CD4-positive, alpha-beta T cell (primary cell): ENCODE measurements at regions of chr1 and their contacts with region 1.

Region 1: GRCh38 chr1:174159252-174160108 is at the start of gene RABGAP1L:
- DNase-seq: peak; percentile 88 to 99 (median 94)
- ATAC-seq: peak; percentile 90
- H3K4me3 ChIP-seq: peak within 1 kb of the TSS; percentile 73
- H3K4me3 Mint-ChIP-seq: peak within 1 kb of the TSS; percentile 96
- H3K27ac ChIP-seq: peak within 1 kb of the TSS; percentile 85 to 95
- H3K27ac Mint-ChIP-seq: peak within 1 kb of the TSS; percentile 92
- H3K4me1 ChIP-seq: peaks cover 20% of the 10 kb centered on the region
- H3K4me1 Mint-ChIP-seq: peaks cover 58% of the 10 kb centered on the region
- H3K27me3 ChIP-seq: no peaks in the 10 kb centered on the region
- H3K27me3 Mint-ChIP-seq: no peaks in the 10 kb centered on the region
- CTCF ChIP-seq: no peak
- total RNA-seq, gene RABGAP1L: 59.8 to 67.6 TPM

Region 2: GRCh38 chr1:173714759-173715537 is 444.5 kb before region 1 on chr1 and contains the start of gene KLHL20:
- CTCF ChIA-PET with region 1: no interaction called
- POLR2A ChIA-PET with region 1: interaction called, 4 read pairs
- intact Hi-C with region 1: loop called in 1 of 2 experiments (anchors 5 kb)
- DNase-seq: peak; percentile 70 to 94 (median 81)
- ATAC-seq: peak; percentile 97
- H3K4me3 ChIP-seq: peak within 1 kb of the TSS; percentile 63
- H3K4me3 Mint-ChIP-seq: peak within 1 kb of the TSS; percentile 97
- H3K27ac ChIP-seq: peak within 1 kb of the TSS; percentile 73 to 81
- H3K27ac Mint-ChIP-seq: peak within 1 kb of the TSS; percentile 91
- H3K4me1 ChIP-seq: peaks cover 8% of the 10 kb centered on the region
- H3K4me1 Mint-ChIP-seq: peaks cover 36% of the 10 kb centered on the region
- H3K27me3 ChIP-seq: peaks cover 4 to 19% of the 10 kb centered on the region in 2 experiments
- H3K27me3 Mint-ChIP-seq: peaks cover 18% of the 10 kb centered on the region
- CTCF ChIP-seq: no peak
- total RNA-seq, gene KLHL20: 29.4 to 30.4 TPM

Region 3: GRCh38 chr1:173867753-173868265 is 291.7 kb before region 1 on chr1 and contains the start of gene GAS5:
- CTCF ChIA-PET with region 1: no interaction called
- POLR2A ChIA-PET with region 1: interaction called, 7 read pairs
- intact Hi-C with region 1: loop called (anchors 1 to 2 kb)
- DNase-seq: peak; percentile 98 to 100 (median 99)
- ATAC-seq: peak; percentile 79
- H3K4me3 ChIP-seq: peak within 1 kb of the TSS; percentile 90
- H3K4me3 Mint-ChIP-seq: peak within 1 kb of the TSS; percentile 93
- H3K27ac ChIP-seq: peak within 1 kb of the TSS; percentile 96
- H3K27ac Mint-ChIP-seq: peak within 1 kb of the TSS; percentile 95
- H3K4me1 ChIP-seq: peaks cover 59% of the 10 kb centered on the region
- H3K4me1 Mint-ChIP-seq: peaks cover 85% of the 10 kb centered on the region
- H3K27me3 ChIP-seq: no peaks in the 10 kb centered on the region
- H3K27me3 Mint-ChIP-seq: no peaks in the 10 kb centered on the region
- CTCF ChIP-seq: no peak
- total RNA-seq, gene GAS5: 865 to 867 TPM

Region 4: GRCh38 chr1:174204697-174205308 is 45.3 kb after region 1 on chr1:
- CTCF ChIA-PET with region 1: no interaction called
- POLR2A ChIA-PET with region 1: no interaction called
- intact Hi-C with region 1: loop called in 1 of 2 experiments (anchors 5 kb)
- DNase-seq: peak in 3 of 14 experiments; percentile 49 to 61 (median 60)
- ATAC-seq: peak; percentile 68
- H3K4me3 ChIP-seq: no peak overlapping the region
- H3K4me3 Mint-ChIP-seq: peak overlapping the region; percentile 61
- H3K27ac ChIP-seq: peak overlapping the region in 1 of 2 donors; percentile 18
- H3K27ac Mint-ChIP-seq: peak overlapping the region; percentile 64
- H3K4me1 ChIP-seq: peaks cover 15% of the 10 kb centered on the region
- H3K4me1 Mint-ChIP-seq: peaks cover 70% of the 10 kb centered on the region
- H3K27me3 ChIP-seq: no peaks in the 10 kb centered on the region
- H3K27me3 Mint-ChIP-seq: no peaks in the 10 kb centered on the region
- CTCF ChIP-seq: no peak

Region 5: GRCh38 chr1:174243451-174244000 is 84.0 kb after region 1 on chr1:
- CTCF ChIA-PET with region 1: no interaction called
- POLR2A ChIA-PET with region 1: no interaction called
- intact Hi-C with region 1: no loop called
- DNase-seq: no peak
- ATAC-seq: no peak
- H3K4me3 ChIP-seq: no peak overlapping the region
- H3K4me3 Mint-ChIP-seq: no peak overlapping the region
- H3K27ac ChIP-seq: no peak overlapping the region
- H3K27ac Mint-ChIP-seq: no peak overlapping the region
- H3K4me1 ChIP-seq: no peaks in the 10 kb centered on the region
- H3K4me1 Mint-ChIP-seq: no peaks in the 10 kb centered on the region
- H3K27me3 ChIP-seq: no peaks in the 10 kb centered on the region
- H3K27me3 Mint-ChIP-seq: no peaks in the 10 kb centered on the region
- CTCF ChIP-seq: no peak

Region 6: GRCh38 chr1:174398246-174398645 is 238.8 kb after region 1 on chr1:
- CTCF ChIA-PET with region 1: no interaction called
- POLR2A ChIA-PET with region 1: no interaction called
- intact Hi-C with region 1: no loop called
- DNase-seq: no peak
- ATAC-seq: no peak
- H3K4me3 ChIP-seq: no peak overlapping the region
- H3K4me3 Mint-ChIP-seq: no peak overlapping the region
- H3K27ac ChIP-seq: no peak overlapping the region
- H3K27ac Mint-ChIP-seq: no peak overlapping the region
- H3K4me1 ChIP-seq: no peaks in the 10 kb centered on the region
- H3K4me1 Mint-ChIP-seq: no peaks in the 10 kb centered on the region
- H3K27me3 ChIP-seq: no peaks in the 10 kb centered on the region
- H3K27me3 Mint-ChIP-seq: no peaks in the 10 kb centered on the region
- CTCF ChIP-seq: no peak

Region 7: DNA sequence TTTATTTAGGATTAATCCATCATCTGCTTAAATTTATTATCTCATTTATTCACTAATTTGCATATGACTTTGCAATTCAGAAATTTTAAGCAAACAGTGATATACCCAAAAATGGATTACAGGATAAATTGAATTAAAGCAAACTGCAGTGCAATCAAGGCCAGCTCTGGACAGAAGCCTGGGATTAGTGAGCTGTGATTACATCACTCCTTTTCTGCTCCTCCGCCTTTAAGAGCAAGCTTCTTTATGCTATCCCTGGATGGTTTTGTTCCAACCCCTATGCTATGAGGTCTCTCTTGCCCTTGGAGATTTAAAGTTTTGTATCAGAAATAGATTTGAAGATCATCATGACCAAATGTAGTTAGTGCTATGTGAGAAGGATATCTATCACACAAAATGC is 320.8 kb after region 1 on chr1:
- CTCF ChIA-PET with region 1: no interaction called
- POLR2A ChIA-PET with region 1: no interaction called
- intact Hi-C with region 1: no loop called
- DNase-seq: no peak
- ATAC-seq: no peak
- H3K4me3 ChIP-seq: no peak overlapping the region
- H3K4me3 Mint-ChIP-seq: no peak overlapping the region
- H3K27ac ChIP-seq: no peak overlapping the region
- H3K27ac Mint-ChIP-seq: no peak overlapping the region
- H3K4me1 ChIP-seq: no peaks in the 10 kb centered on the region
- H3K4me1 Mint-ChIP-seq: peaks cover 10% of the 10 kb centered on the region
- H3K27me3 ChIP-seq: no peaks in the 10 kb centered on the region
- H3K27me3 Mint-ChIP-seq: no peaks in the 10 kb centered on the region
- CTCF ChIP-seq: no peak